CD4-positive, alpha-beta T cell (primary cell): ENCODE measurements at regions of chr12 and their contacts with region 1.

Region 1: DNA sequence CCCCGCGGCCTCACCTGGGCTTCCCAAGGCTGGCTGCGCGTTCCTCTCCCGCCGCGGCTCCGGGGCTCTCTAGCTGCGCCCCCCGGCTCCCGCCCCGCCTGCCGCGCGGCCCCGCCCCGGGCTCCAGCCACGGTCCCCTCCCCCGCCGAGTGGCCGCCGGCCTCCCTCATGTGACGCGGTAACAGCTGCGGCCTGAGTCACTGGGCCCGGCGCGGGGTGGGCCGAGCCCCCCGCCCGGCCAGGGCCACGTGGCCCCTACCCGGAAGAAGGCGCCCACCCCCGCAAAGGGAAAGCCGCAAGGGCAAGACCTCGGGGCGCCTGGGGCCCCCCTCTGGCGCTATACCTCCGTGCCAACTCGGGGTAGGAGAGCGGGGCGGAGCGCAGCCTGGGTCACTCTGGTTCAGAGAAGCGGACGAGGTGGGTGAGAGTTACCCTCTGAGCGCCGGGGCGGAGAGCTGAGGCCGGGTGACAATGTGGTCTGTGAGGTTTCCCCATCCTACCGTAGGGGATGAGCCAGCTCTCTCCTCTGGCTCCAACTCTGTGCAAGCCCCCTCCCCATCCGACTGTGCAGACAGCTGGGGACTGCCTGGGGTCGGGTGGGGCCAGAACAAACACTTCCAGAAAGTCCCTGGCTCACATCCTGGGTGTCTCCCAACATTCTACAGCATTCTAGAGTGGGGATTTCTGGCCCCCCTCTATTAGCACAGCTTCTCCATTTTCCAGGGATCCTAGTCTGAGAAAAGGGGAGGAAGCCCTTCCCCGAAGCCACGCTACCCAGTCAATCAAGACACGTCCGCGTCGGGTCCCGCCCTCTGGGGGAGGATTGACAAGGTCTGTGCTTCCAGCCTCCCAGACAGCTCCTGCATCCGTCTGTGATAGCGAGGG is at the start of gene CD63:
- DNase-seq: peak in 11 of 14 experiments; percentile 33 to 78 (median 52)
- ATAC-seq: peak; percentile 61
- H3K4me3 ChIP-seq: peak within 1 kb of the TSS; percentile 86
- H3K4me3 Mint-ChIP-seq: peak within 1 kb of the TSS; percentile 88
- H3K27ac ChIP-seq: peak within 1 kb of the TSS; percentile 57 to 80
- H3K27ac Mint-ChIP-seq: peak within 1 kb of the TSS; percentile 81
- H3K4me1 ChIP-seq: peaks cover 43% of the 10 kb centered on the region
- H3K4me1 Mint-ChIP-seq: peaks cover 48% of the 10 kb centered on the region
- H3K27me3 ChIP-seq: no peaks in the 10 kb centered on the region
- H3K27me3 Mint-ChIP-seq: no peaks in the 10 kb centered on the region
- CTCF ChIP-seq: no peak
- total RNA-seq, gene CD63: 34.0 to 36.4 TPM

Region 2: GRCh38 chr12:55700255-55701018 is 28.7 kb before region 1 on chr12:
- CTCF ChIA-PET with region 1: no interaction called
- POLR2A ChIA-PET with region 1: no interaction called
- intact Hi-C with region 1: no loop called
- DNase-seq: no peak
- ATAC-seq: no peak
- H3K4me3 ChIP-seq: no peak overlapping the region
- H3K4me3 Mint-ChIP-seq: no peak overlapping the region
- H3K27ac ChIP-seq: no peak overlapping the region
- H3K27ac Mint-ChIP-seq: no peak overlapping the region
- H3K4me1 ChIP-seq: no peaks in the 10 kb centered on the region
- H3K4me1 Mint-ChIP-seq: no peaks in the 10 kb centered on the region
- H3K27me3 ChIP-seq: peaks cover 0 to 3% of the 10 kb centered on the region in 2 experiments
- H3K27me3 Mint-ChIP-seq: peaks cover under 1% of the 10 kb centered on the region
- CTCF ChIP-seq: no peak

Region 3: GRCh38 chr12:55715833-55716581 is 13.2 kb before region 1 on chr12 and contains the start of gene BLOC1S1:
- CTCF ChIA-PET with region 1: interaction called, 4 read pairs
- POLR2A ChIA-PET with region 1: interaction called, 30 read pairs
- intact Hi-C with region 1: no loop called
- DNase-seq: peak; percentile 86 to 96 (median 90)
- ATAC-seq: peak; percentile 97
- H3K4me3 ChIP-seq: peak within 1 kb of the TSS; percentile 75
- H3K4me3 Mint-ChIP-seq: peak within 1 kb of the TSS; percentile 96
- H3K27ac ChIP-seq: peak within 1 kb of the TSS; percentile 93 to 94
- H3K27ac Mint-ChIP-seq: peak within 1 kb of the TSS; percentile 92
- H3K4me1 ChIP-seq: peaks cover 43% of the 10 kb centered on the region
- H3K4me1 Mint-ChIP-seq: peaks cover 34% of the 10 kb centered on the region
- H3K27me3 ChIP-seq: no peaks in the 10 kb centered on the region
- H3K27me3 Mint-ChIP-seq: peaks cover 4% of the 10 kb centered on the region
- CTCF ChIP-seq: no peak
- total RNA-seq, gene BLOC1S1: 34.8 to 36.9 TPM

Region 4: DNA sequence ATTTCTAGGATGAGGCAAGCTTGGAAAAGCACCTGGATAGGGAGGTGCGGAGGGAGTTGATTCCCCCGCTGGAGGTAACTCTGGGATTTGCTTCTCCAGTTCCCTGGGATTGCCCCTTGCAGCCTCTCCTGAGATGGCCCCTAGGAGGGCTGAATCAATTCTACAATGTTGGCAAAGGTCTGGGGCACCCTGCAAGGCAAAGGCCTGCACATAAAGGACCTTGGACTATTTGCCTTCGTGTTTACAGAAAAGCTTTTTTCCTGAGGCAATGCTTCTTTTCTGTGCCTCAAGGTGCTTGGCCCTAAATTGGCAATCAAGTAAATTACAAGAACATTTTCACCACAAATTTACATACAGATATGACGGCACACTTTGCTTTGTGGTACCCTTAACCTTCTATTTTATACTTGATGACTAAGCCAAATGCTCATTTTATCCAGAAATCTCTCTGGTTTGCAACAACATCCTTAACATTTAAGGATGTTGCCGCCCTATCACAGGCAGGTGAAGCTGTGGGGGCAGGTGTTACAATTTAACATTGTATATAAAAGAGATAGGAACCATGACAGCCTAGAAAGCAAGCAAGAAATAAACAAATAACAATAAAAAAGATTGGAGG is 679.7 kb after region 1 on chr12:
- CTCF ChIA-PET with region 1: no interaction called
- POLR2A ChIA-PET with region 1: no interaction called
- intact Hi-C with region 1: no loop called
- DNase-seq: no peak
- ATAC-seq: no peak
- H3K4me3 ChIP-seq: no peak overlapping the region
- H3K4me3 Mint-ChIP-seq: no peak overlapping the region
- H3K27ac ChIP-seq: no peak overlapping the region
- H3K27ac Mint-ChIP-seq: no peak overlapping the region
- H3K4me1 ChIP-seq: no peaks in the 10 kb centered on the region
- H3K4me1 Mint-ChIP-seq: no peaks in the 10 kb centered on the region
- H3K27me3 ChIP-seq: no peaks in the 10 kb centered on the region
- H3K27me3 Mint-ChIP-seq: no peaks in the 10 kb centered on the region
- CTCF ChIP-seq: no peak